OCI-LY7 (cell line): ENCODE measurements at regions of chr9 and their contacts with region 1.

Region 1: GRCh38 chr9:112921549-112921948 is 30.9 kb upstream of the SLC46A2 start:
- DNase-seq: peak; percentile 44
- H3K4me3 ChIP-seq: no peak overlapping the region
- H3K27ac ChIP-seq: no peak overlapping the region
- H3K4me1 ChIP-seq: no peaks in the 10 kb centered on the region
- CTCF ChIP-seq: peak; percentile 75

Region 2: GRCh38 chr9:112971415-112971814 is 49.9 kb after region 1 on chr9:
- CTCF ChIA-PET with region 1: no interaction called
- POLR2A ChIA-PET with region 1: no interaction called
- intact Hi-C with region 1: loop called (anchors 5 kb)
- DNase-seq: peak; percentile 39
- H3K4me3 ChIP-seq: no peak overlapping the region
- H3K27ac ChIP-seq: no peak overlapping the region
- H3K4me1 ChIP-seq: no peaks in the 10 kb centered on the region
- CTCF ChIP-seq: peak; percentile 75